Sigmoid colon (tissue), 7 donors: ENCODE measurements at regions of chr6 and their contacts with region 1.

Region 1: DNA sequence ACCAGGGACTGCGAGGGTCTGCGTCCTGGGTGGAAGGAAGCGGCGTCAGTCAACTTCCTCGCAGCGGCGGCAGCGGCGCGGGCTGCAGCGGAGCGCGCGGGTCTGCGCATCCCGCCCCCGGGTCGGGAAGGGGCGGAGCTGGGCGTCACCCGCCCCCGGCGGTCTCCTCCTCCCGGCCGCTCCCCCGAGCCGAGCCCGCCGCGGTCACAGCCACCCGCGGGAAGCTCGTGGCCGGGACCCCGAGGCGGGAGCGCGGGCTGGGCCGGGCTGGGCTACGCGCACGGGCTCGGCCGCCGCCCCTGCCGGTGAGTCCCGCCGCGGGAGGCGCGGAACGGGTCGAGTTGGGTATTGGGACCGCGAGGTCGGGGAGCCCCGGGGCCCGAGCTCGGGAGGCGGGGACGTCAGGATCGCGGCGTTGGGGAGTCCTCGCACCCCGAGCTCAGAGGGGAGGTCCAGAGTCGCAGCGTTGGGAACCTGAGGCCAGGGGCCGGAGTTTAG is at the start of gene PAQR8:
- DNase-seq: peak; percentile 87
- H3K4me3 ChIP-seq: peak within 1 kb of the TSS; percentile 87 to 96 (median 92)
- H3K27ac ChIP-seq: peak within 1 kb of the TSS; percentile 72 to 91 (median 87)
- H3K4me1 ChIP-seq: peaks cover 0 to 68% (median 54%) of the 10 kb centered on the region in 4 donors
- H3K27me3 ChIP-seq: no peaks in the 10 kb centered on the region
- CTCF ChIP-seq: no peak
- EP300 ChIP-seq: no peak
- POLR2A ChIP-seq: peak in 1 of 2 donors; percentile 25
- total RNA-seq, gene PAQR8: 12.2 to 17.4 (median 13.8) TPM

Region 2: DNA sequence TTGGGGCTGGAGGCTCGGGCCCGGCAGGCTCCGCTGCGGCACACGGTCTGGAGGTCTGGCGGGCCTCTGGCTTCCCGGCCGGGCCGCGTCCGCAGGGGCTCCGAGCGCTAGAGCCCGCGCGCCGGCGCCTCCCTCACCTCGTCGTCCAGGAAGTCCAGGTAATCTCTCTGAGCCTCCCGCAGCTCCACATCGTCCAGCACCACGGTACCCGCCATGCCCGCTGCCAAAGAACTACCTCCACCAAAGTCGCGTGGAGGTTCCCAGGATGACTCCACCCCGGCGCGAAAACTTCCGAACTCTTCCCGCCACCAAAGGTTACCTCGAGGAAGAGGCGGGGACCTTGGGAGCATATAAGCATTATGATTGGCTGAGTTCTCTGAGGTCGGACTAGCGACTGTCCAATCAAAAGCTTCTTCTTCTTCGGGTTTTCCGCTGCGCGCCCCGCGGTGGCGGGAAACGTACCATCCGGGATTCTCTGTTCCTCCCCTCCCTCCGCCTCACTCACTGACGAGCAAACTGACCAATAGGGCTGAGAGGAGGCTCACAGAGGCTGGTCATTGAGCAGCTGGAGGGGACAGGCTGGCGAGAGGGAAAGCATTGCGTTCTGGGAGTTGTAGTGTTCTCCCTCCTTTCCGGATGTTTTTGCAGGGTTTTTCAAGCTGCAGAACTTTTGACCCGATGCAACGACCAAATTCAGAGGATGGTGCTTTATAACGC is 77.4 kb before region 1 on chr6 and contains the start of gene MCM3:
- intact Hi-C with region 1: loop called (anchors 1 kb)
- DNase-seq: peak; percentile 99
- H3K4me3 ChIP-seq: peak within 1 kb of the TSS; percentile 62 to 88 (median 69)
- H3K27ac ChIP-seq: peak within 1 kb of the TSS; percentile 70 to 76 (median 75)
- H3K4me1 ChIP-seq: peaks cover 0 to 17% (median 12%) of the 10 kb centered on the region in 4 donors
- H3K27me3 ChIP-seq: no peaks in the 10 kb centered on the region
- CTCF ChIP-seq: no peak
- EP300 ChIP-seq: no peak
- POLR2A ChIP-seq: no peak
- total RNA-seq, gene MCM3: 31.0 to 36.8 (median 32.8) TPM

Region 3: GRCh38 chr6:52304983-52305390 is 57.0 kb before region 1 on chr6:
- intact Hi-C with region 1: loop called (anchors 5 kb)
- DNase-seq: no peak
- H3K4me3 ChIP-seq: no peak overlapping the region
- H3K27ac ChIP-seq: peak overlapping the region; percentile 52 to 71 (median 65)
- H3K4me1 ChIP-seq: peaks cover 0 to 27% (median 23%) of the 10 kb centered on the region in 4 donors
- H3K27me3 ChIP-seq: no peaks in the 10 kb centered on the region
- CTCF ChIP-seq: no peak
- EP300 ChIP-seq: no peak
- POLR2A ChIP-seq: no peak

Region 4: GRCh38 chr6:52399511-52400312 is 37.7 kb after region 1 on chr6:
- intact Hi-C with region 1: loop called (anchors 2 kb)
- DNase-seq: no peak
- H3K4me3 ChIP-seq: no peak overlapping the region
- H3K27ac ChIP-seq: no peak overlapping the region
- H3K4me1 ChIP-seq: peaks cover 0 to 16% (median 8%) of the 10 kb centered on the region in 4 donors
- H3K27me3 ChIP-seq: no peaks in the 10 kb centered on the region
- CTCF ChIP-seq: peak; percentile 67 to 87 (median 79)
- EP300 ChIP-seq: no peak
- POLR2A ChIP-seq: no peak

Region 5: DNA sequence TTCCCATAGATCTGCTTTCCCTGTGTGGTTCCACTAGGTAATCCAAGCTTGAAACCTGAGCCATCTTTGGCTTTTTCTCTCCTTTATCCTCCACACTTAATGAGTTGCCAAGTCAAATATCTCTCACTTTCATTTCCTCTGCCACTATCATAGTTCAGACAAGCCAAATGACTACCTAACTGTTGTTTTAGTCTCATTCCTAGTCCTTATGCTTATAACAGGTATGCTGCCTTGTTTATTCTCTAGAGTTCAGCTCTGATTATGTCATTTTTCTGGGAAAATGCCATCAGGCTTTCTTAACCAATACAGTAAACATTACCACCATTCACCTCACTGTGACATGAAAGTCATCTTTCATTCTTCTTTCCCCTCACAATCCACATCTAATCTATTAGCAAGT is 64.7 kb after region 1 on chr6:
- intact Hi-C with region 1: no loop called
- DNase-seq: no peak
- H3K4me3 ChIP-seq: no peak overlapping the region
- H3K27ac ChIP-seq: no peak overlapping the region
- H3K4me1 ChIP-seq: no peaks in the 10 kb centered on the region
- H3K27me3 ChIP-seq: no peaks in the 10 kb centered on the region
- CTCF ChIP-seq: no peak
- EP300 ChIP-seq: no peak
- POLR2A ChIP-seq: no peak

Region 6: GRCh38 chr6:52937908-52938307 is 575.9 kb after region 1 on chr6:
- intact Hi-C with region 1: no loop called
- DNase-seq: no peak
- H3K4me3 ChIP-seq: no peak overlapping the region
- H3K27ac ChIP-seq: no peak overlapping the region
- H3K4me1 ChIP-seq: no peaks in the 10 kb centered on the region
- H3K27me3 ChIP-seq: no peaks in the 10 kb centered on the region
- CTCF ChIP-seq: no peak
- EP300 ChIP-seq: no peak
- POLR2A ChIP-seq: no peak

Region 7: GRCh38 chr6:53059648-53060589 is 697.9 kb after region 1 on chr6:
- intact Hi-C with region 1: no loop called
- DNase-seq: no peak
- H3K4me3 ChIP-seq: peak overlapping the region; percentile 70 to 92 (median 88)
- H3K27ac ChIP-seq: peak overlapping the region; percentile 53 to 96 (median 94)
- H3K4me1 ChIP-seq: peaks cover 0 to 62% (median 56%) of the 10 kb centered on the region in 4 donors
- H3K27me3 ChIP-seq: no peaks in the 10 kb centered on the region
- CTCF ChIP-seq: no peak
- EP300 ChIP-seq: no peak
- POLR2A ChIP-seq: no peak